Lower leg skin (tissue), 4 donors: ENCODE measurements at regions of chr17 and their contacts with region 1.

Region 1: GRCh38 chr17:28967221-28968140 is 16.2 kb upstream of the PHF12 start:
- DNase-seq: no peak
- H3K4me3 ChIP-seq: no peak overlapping the region
- CTCF ChIP-seq: no peak
- POLR2A ChIP-seq: no peak

Region 2: GRCh38 chr17:29116804-29117772 is 149.6 kb after region 1 on chr17:
- intact Hi-C with region 1: loop called (anchors 5 kb)
- DNase-seq: peak; percentile 58 to 95
- H3K4me3 ChIP-seq: no peak overlapping the region
- CTCF ChIP-seq: peak in 1 of 3 donors; percentile 38
- POLR2A ChIP-seq: no peak

Region 3: GRCh38 chr17:29241015-29241963 is 273.8 kb after region 1 on chr17:
- intact Hi-C with region 1: no loop called
- DNase-seq: no peak
- H3K4me3 ChIP-seq: no peak overlapping the region
- CTCF ChIP-seq: no peak
- POLR2A ChIP-seq: no peak